HepG2 (cell line): ENCODE measurements at regions of chr15 and their contacts with region 1.

Region 1: GRCh38 chr15:64387562-64388168 is at the start of gene TRIP4:
- DNase-seq: peak; percentile 93
- ATAC-seq: peak; percentile 100
- H3K4me3 ChIP-seq: peak within 1 kb of the TSS; percentile 67 to 98 (median 94)
- H3K27ac ChIP-seq: peak within 1 kb of the TSS; percentile 72
- H3K4me1 ChIP-seq: peaks cover 20% of the 10 kb centered on the region
- H3K27me3 ChIP-seq: no peaks in the 10 kb centered on the region; a peak in 1 of 5 replicates
- CTCF ChIP-seq: peak; percentile 61
- EP300 ChIP-seq: peak in 1 of 2 experiments; percentile 67; a peak in 2 of 4 replicates
- POLR2A ChIP-seq: peak; percentile 90 to 91
- RAD21 ChIP-seq: peak; percentile 76
- total RNA-seq, gene TRIP4: 7.1 and 19.7 TPM in 2 replicates

Region 2: GRCh38 chr15:64162870-64163658 is 224.6 kb before region 1 on chr15 and contains the start of gene PPIB:
- CTCF ChIA-PET with region 1: no interaction called
- POLR2A ChIA-PET with region 1: interaction called, 20 read pairs
- in situ Hi-C with region 1: no loop called
- intact Hi-C with region 1: loop called (anchors 2 kb)
- DNase-seq: peak; percentile 93
- ATAC-seq: peak; percentile 96
- H3K4me3 ChIP-seq: peak within 1 kb of the TSS; percentile 95 to 98 (median 97)
- H3K27ac ChIP-seq: peak within 1 kb of the TSS; percentile 90
- H3K4me1 ChIP-seq: peaks cover 53% of the 10 kb centered on the region
- H3K27me3 ChIP-seq: no peaks in the 10 kb centered on the region; a peak in 1 of 5 replicates
- CTCF ChIP-seq: peak; percentile 89
- EP300 ChIP-seq: 0 out of 4 replicates have a peak, but pooled peaks of 1 of the 2 experiments have one; percentile 19
- POLR2A ChIP-seq: peak; percentile 88
- RAD21 ChIP-seq: peak; percentile 66
- total RNA-seq, gene PPIB: 476 and 882 TPM in 2 replicates